ENCODE measurements at regions of chr14 and their contacts with region 1.

Region 1: GRCh38 chr14:76647697-76648298 is 113.5 kb upstream of the VASH1 start:
- DNase-seq: peak in 1 of 10 donors; percentile 13
- H3K4me3 ChIP-seq: no peak overlapping the region
- H3K27ac ChIP-seq: no peak overlapping the region
- H3K27me3 ChIP-seq: no peaks in the 10 kb centered on the region
- CTCF ChIP-seq: peak; percentile 55 to 82 (median 74)

Region 2: GRCh38 chr14:76456200-76456599 is 191.6 kb before region 1 on chr14:
- intact Hi-C with region 1: loop called in 1 of 2 experiments (anchors 2 kb)
- DNase-seq: no peak
- H3K4me3 ChIP-seq: no peak overlapping the region
- H3K27ac ChIP-seq: no peak overlapping the region
- H3K27me3 ChIP-seq: peaks cover 0 to 4% (median 0%) of the 10 kb centered on the region in 45 donors
- CTCF ChIP-seq: peak in 51 of 56 donors; percentile 12 to 63 (median 36)

Region 3: GRCh38 chr14:76576047-76576741 is 71.6 kb before region 1 on chr14:
- intact Hi-C with region 1: no loop called
- DNase-seq: no peak
- H3K4me3 ChIP-seq: no peak overlapping the region
- H3K27ac ChIP-seq: no peak overlapping the region
- H3K27me3 ChIP-seq: peaks cover 0 to 15% (median 0%) of the 10 kb centered on the region in 45 donors
- CTCF ChIP-seq: no peak

Measured in dorsolateral prefrontal cortex (tissue), 120 donors.